AG04449 (cell line): ENCODE measurements at regions of chr20 and their contacts with region 1.

Region 1: GRCh38 chr20:38073307-38074071 is 39.9 kb downstream of the RPRD1B start:
- DNase-seq: peak; percentile 93
- H3K4me3 ChIP-seq: no peak overlapping the region
- CTCF ChIP-seq: peak; percentile 57

Region 2: DNA sequence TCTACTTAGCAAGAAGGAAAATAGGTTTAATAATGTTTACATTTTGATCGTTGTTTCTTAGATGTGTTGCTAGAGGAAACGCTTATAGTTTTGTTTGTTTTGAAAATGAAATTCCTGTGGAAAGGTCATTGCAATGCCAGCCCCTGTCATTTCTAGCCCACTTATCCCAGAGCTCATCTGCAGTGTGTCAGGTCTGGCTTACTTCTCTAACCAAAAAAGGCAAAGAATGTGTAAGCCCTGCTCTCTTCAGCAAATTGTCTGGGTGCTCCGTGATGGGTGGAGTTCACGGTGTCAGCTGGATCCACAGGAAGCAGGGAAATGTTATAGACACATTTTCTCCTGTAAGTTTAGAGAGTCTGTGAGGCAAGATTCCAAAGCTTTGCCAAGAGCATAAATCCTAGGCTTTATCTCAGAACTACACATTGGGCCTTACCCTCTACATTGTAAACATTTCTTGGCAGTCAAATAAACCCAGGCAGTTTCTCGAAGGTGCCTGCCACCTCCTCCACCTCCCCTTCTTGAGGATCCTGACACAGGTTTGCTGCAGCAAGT is 11.0 kb after region 1 on chr20:
- CTCF ChIA-PET with region 1: interaction called, 69 read pairs
- POLR2A ChIA-PET with region 1: interaction called, 6 read pairs
- DNase-seq: peak; percentile 80
- H3K4me3 ChIP-seq: no peak overlapping the region
- CTCF ChIP-seq: no peak

Region 3: GRCh38 chr20:38113401-38114325 is 40.2 kb after region 1 on chr20:
- CTCF ChIA-PET with region 1: interaction called, 11 read pairs
- POLR2A ChIA-PET with region 1: interaction called, 5 read pairs
- DNase-seq: no peak
- H3K4me3 ChIP-seq: no peak overlapping the region
- CTCF ChIP-seq: peak; percentile 25

Region 4: GRCh38 chr20:38152621-38153231 is 79.2 kb after region 1 on chr20:
- CTCF ChIA-PET with region 1: interaction called, 12 read pairs
- POLR2A ChIA-PET with region 1: no interaction called
- DNase-seq: no peak
- H3K4me3 ChIP-seq: no peak overlapping the region
- CTCF ChIP-seq: no peak

Region 5: GRCh38 chr20:38173237-38174156 is 100.0 kb after region 1 on chr20:
- CTCF ChIA-PET with region 1: interaction called, 23 read pairs
- POLR2A ChIA-PET with region 1: interaction called, 5 read pairs
- DNase-seq: peak; percentile 59
- H3K4me3 ChIP-seq: no peak overlapping the region
- CTCF ChIP-seq: no peak

Region 6: GRCh38 chr20:38210741-38211140 is 137.3 kb after region 1 on chr20:
- CTCF ChIA-PET with region 1: interaction called, 1,143 read pairs
- POLR2A ChIA-PET with region 1: no interaction called
- DNase-seq: no peak
- H3K4me3 ChIP-seq: no peak overlapping the region
- CTCF ChIP-seq: no peak